ENCODE measurements at regions of chr10 and their contacts with region 1.

Region 1: GRCh38 chr10:11793762-11794479 is 29.2 kb upstream of the PROSER2 start:
- DNase-seq: no peak
- H3K4me3 ChIP-seq: no peak overlapping the region
- H3K27ac ChIP-seq: no peak overlapping the region
- H3K4me1 ChIP-seq: peaks cover 0 to 23% (median 15%) of the 10 kb centered on the region in 4 experiments
- H3K27me3 ChIP-seq: no peaks in the 10 kb centered on the region

Region 2: GRCh38 chr10:11757821-11758463 is 36.0 kb before region 1 on chr10:
- CTCF ChIA-PET with region 1: no interaction called
- POLR2A ChIA-PET with region 1: no interaction called
- DNase-seq: peak; percentile 81 to 92 (median 90)
- H3K4me3 ChIP-seq: no peak overlapping the region
- H3K27ac ChIP-seq: no peak overlapping the region
- H3K4me1 ChIP-seq: peaks cover 0 to 12% (median 7%) of the 10 kb centered on the region in 4 experiments
- H3K27me3 ChIP-seq: no peaks in the 10 kb centered on the region

Region 3: GRCh38 chr10:11810313-11810766 is 16.4 kb after region 1 on chr10:
- CTCF ChIA-PET with region 1: interaction called, 18 read pairs
- POLR2A ChIA-PET with region 1: no interaction called
- DNase-seq: no peak
- H3K4me3 ChIP-seq: no peak overlapping the region
- H3K27ac ChIP-seq: no peak overlapping the region
- H3K4me1 ChIP-seq: peaks cover 0 to 12% (median 11%) of the 10 kb centered on the region in 4 experiments
- H3K27me3 ChIP-seq: no peaks in the 10 kb centered on the region